MCF 10A (cell line): ENCODE measurements at regions of chr11 and their contacts with region 1.

Region 1: GRCh38 chr11:122101625-122102291 is 14.3 kb downstream of the BLID start:
- DNase-seq: peak; percentile 85
- H3K4me3 Mint-ChIP-seq: no peak overlapping the region
- H3K27ac Mint-ChIP-seq: no peak overlapping the region
- H3K4me1 Mint-ChIP-seq: peaks cover 27% of the 10 kb centered on the region
- H3K27me3 Mint-ChIP-seq: no peaks in the 10 kb centered on the region
- CTCF ChIP-seq: peak; percentile 41

Region 2: DNA sequence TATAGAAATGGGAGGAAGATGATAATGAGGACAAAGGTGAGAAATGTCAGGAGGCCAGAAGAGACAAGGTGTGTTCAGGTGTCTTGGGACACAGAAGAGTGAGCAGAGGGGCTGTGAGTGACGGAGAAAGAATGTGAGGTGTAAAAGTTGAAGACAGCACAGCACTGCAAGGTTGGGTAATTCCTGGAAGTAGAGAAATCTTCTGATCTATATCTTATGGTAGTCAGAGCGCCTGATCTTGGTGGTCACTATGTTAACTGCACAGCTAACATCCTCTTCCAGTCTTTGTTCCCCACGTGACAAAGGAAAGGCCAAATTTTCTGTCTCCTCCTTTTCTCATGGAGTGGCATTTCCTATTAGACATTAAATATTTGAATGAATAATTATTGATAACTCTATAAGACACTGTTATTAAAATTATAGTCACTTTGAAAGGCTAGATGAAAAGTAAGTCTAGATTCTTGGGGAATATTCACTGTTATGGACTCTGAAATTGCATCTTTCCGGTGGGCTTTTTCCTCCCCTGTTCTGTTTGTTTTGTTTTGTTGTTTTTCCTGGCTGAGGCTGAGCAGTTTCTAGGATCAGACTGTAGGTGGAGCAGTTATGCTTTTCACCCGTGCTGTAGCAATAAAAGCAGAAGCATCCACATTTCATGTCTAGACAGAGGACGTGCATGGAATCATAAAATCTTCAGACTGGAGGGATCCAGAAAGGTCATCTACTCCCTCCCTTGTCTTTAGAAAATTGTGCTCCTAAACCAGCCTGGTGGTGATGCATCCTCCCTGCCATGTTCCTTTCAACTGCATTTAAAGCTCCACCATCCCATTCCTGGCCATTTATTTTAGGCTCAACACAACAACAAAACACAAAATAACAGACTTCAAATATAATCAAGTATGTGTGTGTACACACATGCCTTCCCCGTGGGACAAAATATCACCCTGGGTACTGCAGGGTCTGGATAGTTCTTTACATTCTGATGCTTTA is 782.6 kb before region 1 on chr11:
- CTCF ChIA-PET with region 1: no interaction called
- POLR2A ChIA-PET with region 1: no interaction called
- intact Hi-C with region 1: loop called (anchors 1 kb)
- DNase-seq: peak; percentile 57
- H3K4me3 Mint-ChIP-seq: no peak overlapping the region
- H3K27ac Mint-ChIP-seq: no peak overlapping the region
- H3K4me1 Mint-ChIP-seq: peaks cover 6% of the 10 kb centered on the region
- H3K27me3 Mint-ChIP-seq: peaks cover 18% of the 10 kb centered on the region
- CTCF ChIP-seq: peak; percentile 68

Region 3: GRCh38 chr11:121829159-121829643 is 272.6 kb before region 1 on chr11:
- CTCF ChIA-PET with region 1: no interaction called
- POLR2A ChIA-PET with region 1: no interaction called
- intact Hi-C with region 1: loop called (anchors 5 kb)
- DNase-seq: peak; percentile 74
- H3K4me3 Mint-ChIP-seq: peak overlapping the region; percentile 41
- H3K27ac Mint-ChIP-seq: peak overlapping the region; percentile 71
- H3K4me1 Mint-ChIP-seq: peaks cover 13% of the 10 kb centered on the region
- H3K27me3 Mint-ChIP-seq: no peaks in the 10 kb centered on the region
- CTCF ChIP-seq: no peak

Region 4: DNA sequence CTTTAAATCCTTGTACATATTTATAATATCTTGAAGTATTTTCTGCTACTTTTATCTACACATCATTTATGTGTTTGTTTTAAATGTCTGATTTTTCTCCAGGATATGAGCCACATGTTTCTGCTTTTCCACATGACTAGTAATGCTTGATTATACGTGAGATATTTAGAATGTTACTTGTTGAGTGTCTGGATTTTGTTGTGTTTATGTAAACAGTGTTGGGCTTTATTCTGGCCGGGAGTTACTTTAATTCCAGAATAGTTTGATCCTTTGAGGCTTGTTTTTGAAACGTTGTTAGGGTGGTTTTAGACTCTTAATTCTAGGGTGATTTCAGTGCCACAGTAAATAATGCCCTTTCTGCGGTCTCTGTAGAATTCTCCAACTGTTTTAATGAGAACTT is 238.6 kb before region 1 on chr11:
- CTCF ChIA-PET with region 1: no interaction called
- POLR2A ChIA-PET with region 1: no interaction called
- intact Hi-C with region 1: no loop called
- DNase-seq: no peak
- H3K4me3 Mint-ChIP-seq: no peak overlapping the region
- H3K27ac Mint-ChIP-seq: no peak overlapping the region
- H3K4me1 Mint-ChIP-seq: no peaks in the 10 kb centered on the region
- H3K27me3 Mint-ChIP-seq: no peaks in the 10 kb centered on the region
- CTCF ChIP-seq: no peak

Region 5: GRCh38 chr11:121950160-121950559 is 151.6 kb before region 1 on chr11:
- CTCF ChIA-PET with region 1: no interaction called
- POLR2A ChIA-PET with region 1: no interaction called
- intact Hi-C with region 1: no loop called
- DNase-seq: no peak
- H3K4me3 Mint-ChIP-seq: no peak overlapping the region
- H3K27ac Mint-ChIP-seq: no peak overlapping the region
- H3K4me1 Mint-ChIP-seq: no peaks in the 10 kb centered on the region
- H3K27me3 Mint-ChIP-seq: no peaks in the 10 kb centered on the region
- CTCF ChIP-seq: no peak

Region 6: DNA sequence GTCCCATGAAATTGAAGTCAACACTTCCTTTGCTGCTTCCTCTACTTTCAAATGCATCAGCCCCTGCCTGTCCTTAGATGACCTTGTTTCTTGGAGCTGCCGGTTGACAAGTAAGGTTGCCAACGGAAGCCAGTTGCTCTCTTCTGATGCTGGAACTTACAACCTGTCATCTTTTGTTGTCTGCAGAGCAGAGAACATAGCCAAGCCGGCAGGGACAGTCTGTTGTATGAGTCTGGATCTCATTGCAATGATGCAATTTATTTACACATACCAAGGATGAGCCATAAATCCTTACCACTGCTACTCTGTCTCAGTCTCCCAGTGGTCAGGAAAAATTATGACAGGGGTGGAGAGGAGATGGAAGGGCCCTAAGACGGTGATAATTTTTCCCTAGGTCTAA is 137.2 kb before region 1 on chr11:
- CTCF ChIA-PET with region 1: no interaction called
- POLR2A ChIA-PET with region 1: no interaction called
- intact Hi-C with region 1: no loop called
- DNase-seq: peak; percentile 54
- H3K4me3 Mint-ChIP-seq: no peak overlapping the region
- H3K27ac Mint-ChIP-seq: peak overlapping the region; percentile 47
- H3K4me1 Mint-ChIP-seq: peaks cover 16% of the 10 kb centered on the region
- H3K27me3 Mint-ChIP-seq: no peaks in the 10 kb centered on the region
- CTCF ChIP-seq: no peak

Region 7: DNA sequence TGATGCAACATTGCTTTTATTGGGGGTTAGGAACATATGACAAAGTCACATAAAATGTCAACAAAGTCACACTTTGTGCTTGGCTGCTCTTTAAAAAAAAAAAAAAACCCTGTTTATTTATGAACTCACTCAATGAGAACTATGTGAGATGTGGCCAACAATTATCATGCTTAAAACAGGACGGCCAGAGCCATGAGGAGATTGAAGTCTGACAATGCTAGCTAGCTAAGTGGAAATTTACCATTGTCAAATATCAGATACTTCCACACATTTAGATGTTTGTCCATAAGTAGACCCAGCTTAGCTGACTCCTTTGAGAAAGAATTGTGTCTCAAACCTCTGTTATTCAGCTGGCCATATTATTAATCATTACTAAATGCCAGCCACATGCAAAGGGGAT is 12.6 kb before region 1 on chr11:
- CTCF ChIA-PET with region 1: interaction called, 6 read pairs
- POLR2A ChIA-PET with region 1: interaction called, 25 read pairs
- intact Hi-C with region 1: no loop called
- DNase-seq: no peak
- H3K4me3 Mint-ChIP-seq: no peak overlapping the region
- H3K27ac Mint-ChIP-seq: no peak overlapping the region
- H3K4me1 Mint-ChIP-seq: peaks cover 47% of the 10 kb centered on the region
- H3K27me3 Mint-ChIP-seq: no peaks in the 10 kb centered on the region
- CTCF ChIP-seq: no peak

Region 8: GRCh38 chr11:122146475-122146874 is 44.7 kb after region 1 on chr11:
- CTCF ChIA-PET with region 1: no interaction called
- POLR2A ChIA-PET with region 1: interaction called, 11 read pairs
- intact Hi-C with region 1: no loop called
- DNase-seq: peak; percentile 46
- H3K4me3 Mint-ChIP-seq: no peak overlapping the region
- H3K27ac Mint-ChIP-seq: peak overlapping the region; percentile 81
- H3K4me1 Mint-ChIP-seq: peaks cover 31% of the 10 kb centered on the region
- H3K27me3 Mint-ChIP-seq: no peaks in the 10 kb centered on the region
- CTCF ChIP-seq: no peak

Region 9: DNA sequence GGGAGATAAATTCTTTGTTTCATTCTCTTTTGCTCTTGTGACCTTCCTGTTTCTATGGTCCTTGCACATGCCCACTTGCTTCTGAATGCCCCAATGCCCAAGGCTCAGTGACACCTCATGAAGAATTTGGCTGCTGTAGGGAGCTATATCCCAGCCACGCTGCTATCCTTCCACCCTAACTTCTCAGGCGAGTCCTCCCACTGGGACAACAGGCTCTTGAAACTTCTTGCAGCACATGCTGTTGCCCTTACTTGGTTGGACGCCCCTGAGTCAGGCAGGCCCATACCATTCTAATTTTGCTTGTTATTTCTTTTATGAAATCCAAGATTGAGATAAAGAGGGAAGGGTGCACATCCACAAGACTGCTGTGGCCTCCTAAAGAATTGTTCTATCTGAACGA is 71.8 kb after region 1 on chr11:
- CTCF ChIA-PET with region 1: interaction called, 12 read pairs
- POLR2A ChIA-PET with region 1: interaction called, 69 read pairs
- intact Hi-C with region 1: no loop called
- DNase-seq: no peak
- H3K4me3 Mint-ChIP-seq: peak overlapping the region; percentile 42
- H3K27ac Mint-ChIP-seq: peak overlapping the region; percentile 84
- H3K4me1 Mint-ChIP-seq: peaks cover 68% of the 10 kb centered on the region
- H3K27me3 Mint-ChIP-seq: no peaks in the 10 kb centered on the region
- CTCF ChIP-seq: no peak

Region 10: DNA sequence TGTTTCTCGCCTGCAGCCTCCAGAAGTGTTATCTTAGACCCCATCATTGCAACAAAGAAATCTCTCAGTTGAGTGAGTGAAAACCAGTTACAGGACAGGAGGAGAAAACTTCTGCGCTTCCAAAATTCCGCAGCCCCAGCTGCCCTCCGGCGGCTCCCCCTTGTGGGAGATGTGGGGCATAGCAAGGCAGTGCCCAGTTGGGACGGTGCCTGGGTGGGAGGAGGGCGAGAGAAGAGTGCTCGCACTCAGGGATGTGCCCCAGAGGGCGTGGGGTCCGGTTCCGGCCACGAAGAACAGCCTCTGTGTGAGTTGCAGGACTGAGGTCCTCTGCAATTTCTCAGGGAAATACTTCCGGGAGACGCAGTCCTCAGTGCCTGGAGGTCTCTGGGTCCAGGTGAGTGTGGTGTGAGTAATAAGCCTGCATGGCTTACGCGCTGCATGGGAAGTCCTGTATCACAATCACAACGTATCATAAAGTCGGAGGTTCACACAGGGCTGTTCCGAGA is 101.2 kb after region 1 on chr11:
- CTCF ChIA-PET with region 1: interaction called, 54 read pairs
- POLR2A ChIA-PET with region 1: interaction called, 103 read pairs
- intact Hi-C with region 1: loop called (anchors 1 kb)
- DNase-seq: peak; percentile 81
- H3K4me3 Mint-ChIP-seq: peak overlapping the region; percentile 43
- H3K27ac Mint-ChIP-seq: no peak overlapping the region
- H3K4me1 Mint-ChIP-seq: peaks cover 45% of the 10 kb centered on the region
- H3K27me3 Mint-ChIP-seq: no peaks in the 10 kb centered on the region
- CTCF ChIP-seq: peak; percentile 96

Region 11: DNA sequence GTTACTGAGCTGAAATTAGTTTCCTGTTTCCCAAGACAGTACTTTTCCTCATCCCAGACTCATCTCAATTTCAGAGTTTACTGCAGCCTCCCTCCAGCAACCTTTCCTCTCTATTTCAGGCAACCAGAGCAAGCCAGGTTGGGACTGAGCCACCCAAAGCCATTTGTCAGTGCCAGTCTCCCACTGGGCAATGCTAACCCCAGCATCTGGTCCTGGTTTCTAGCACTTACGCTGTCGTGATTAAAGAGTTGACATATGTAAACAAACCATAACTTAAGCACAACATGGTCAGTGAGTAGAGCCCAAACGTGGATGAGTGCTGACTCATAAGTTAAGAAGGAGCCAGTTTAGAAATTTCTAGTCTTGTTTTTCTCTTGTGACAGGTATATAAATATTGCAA is 133.9 kb after region 1 on chr11:
- CTCF ChIA-PET with region 1: no interaction called
- POLR2A ChIA-PET with region 1: no interaction called
- intact Hi-C with region 1: no loop called
- DNase-seq: peak; percentile 80
- H3K4me3 Mint-ChIP-seq: no peak overlapping the region
- H3K27ac Mint-ChIP-seq: no peak overlapping the region
- H3K4me1 Mint-ChIP-seq: peaks cover 17% of the 10 kb centered on the region
- H3K27me3 Mint-ChIP-seq: no peaks in the 10 kb centered on the region
- CTCF ChIP-seq: no peak